ENCODE measurements at regions of chr15 and their contacts with region 1.

Region 1: GRCh38 chr15:89206908-89207331 is 14.5 kb downstream of the RLBP1 start:
- DNase-seq: peak; percentile 69 to 79
- H3K4me3 ChIP-seq: peak overlapping the region in 1 of 2 donors; percentile 20
- H3K27ac ChIP-seq: no peak overlapping the region
- H3K4me1 ChIP-seq: peaks cover 0 to 6% (median 3%) of the 10 kb centered on the region in 4 donors
- H3K27me3 ChIP-seq: no peaks in the 10 kb centered on the region
- CTCF ChIP-seq: peak; percentile 93 to 96

Region 2: GRCh38 chr15:89243691-89244471 is 37.0 kb after region 1 on chr15 and contains the start of gene FANCI:
- intact Hi-C with region 1: loop called (anchors 5 kb)
- DNase-seq: peak; percentile 95 to 96
- H3K4me3 ChIP-seq: peak within 1 kb of the TSS; percentile 59 to 62
- H3K27ac ChIP-seq: peak within 1 kb of the TSS; percentile 63 to 72
- H3K4me1 ChIP-seq: peaks cover 0 to 21% (median 14%) of the 10 kb centered on the region in 4 donors
- H3K27me3 ChIP-seq: no peaks in the 10 kb centered on the region
- CTCF ChIP-seq: peak; percentile 28 to 41

Region 3: GRCh38 chr15:89317186-89317720 is 110.3 kb after region 1 on chr15:
- intact Hi-C with region 1: loop called (anchors 10 kb)
- DNase-seq: peak in 1 of 2 donors; percentile 20
- H3K4me3 ChIP-seq: no peak overlapping the region
- H3K27ac ChIP-seq: no peak overlapping the region
- H3K4me1 ChIP-seq: no peaks in the 10 kb centered on the region
- H3K27me3 ChIP-seq: no peaks in the 10 kb centered on the region
- CTCF ChIP-seq: no peak